H1 (cell line): ENCODE measurements at regions of chr12 and their contacts with region 1.

Region 1: DNA sequence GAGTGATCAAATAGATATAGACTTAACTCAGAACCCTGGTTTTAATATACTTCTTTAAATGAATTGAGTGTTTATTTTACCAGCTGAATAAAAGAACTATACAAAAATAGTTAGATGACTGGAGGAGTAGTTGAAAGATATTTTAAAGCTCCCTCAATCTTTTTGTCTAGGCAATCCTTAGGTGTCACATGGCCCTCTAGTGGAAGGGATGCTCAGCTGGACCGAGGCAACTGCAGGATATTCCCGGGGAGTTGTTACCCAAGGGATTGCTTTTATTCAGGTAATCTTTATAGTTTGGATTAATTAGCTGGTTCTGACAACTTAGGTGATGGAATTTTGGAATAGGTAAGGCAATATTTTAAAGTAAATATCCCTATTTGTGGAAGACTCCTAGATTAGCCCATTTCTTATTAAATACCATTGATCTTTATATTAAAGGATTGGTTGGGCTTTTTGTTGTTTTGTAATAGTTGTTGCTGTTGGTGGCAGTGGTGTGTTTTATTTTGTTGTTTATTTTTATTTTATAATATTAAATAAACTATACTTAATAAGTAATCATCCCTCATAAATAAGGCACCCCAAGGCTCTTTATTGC is 57.1 kb downstream of the ZDHHC17 start:
- DNase-seq: peak in 1 of 2 experiments; percentile 5
- H3K4me3 ChIP-seq: no peak overlapping the region
- H3K27ac ChIP-seq: no peak overlapping the region
- H3K4me1 ChIP-seq: no peaks in the 10 kb centered on the region
- H3K27me3 ChIP-seq: no peaks in the 10 kb centered on the region
- CTCF ChIP-seq: peak; percentile 71 to 74 (median 73)
- EP300 ChIP-seq: no peak
- POLR2A ChIP-seq: no peak
- RAD21 ChIP-seq: peak; percentile 76 to 79

Region 2: GRCh38 chr12:76621582-76622024 is 199.4 kb before region 1 on chr12:
- CTCF ChIA-PET with region 1: interaction called, 16 read pairs
- POLR2A ChIA-PET with region 1: no interaction called
- DNase-seq: peak; percentile 17 to 77
- H3K4me3 ChIP-seq: no peak overlapping the region
- H3K27ac ChIP-seq: no peak overlapping the region
- H3K4me1 ChIP-seq: no peaks in the 10 kb centered on the region; a peak in 1 of 7 replicates
- H3K27me3 ChIP-seq: no peaks in the 10 kb centered on the region
- CTCF ChIP-seq: peak in 2 of 3 experiments; percentile 86 to 89; a peak in 3 of 4 replicates
- EP300 ChIP-seq: no peak
- POLR2A ChIP-seq: no peak
- RAD21 ChIP-seq: peak; percentile 99

Region 3: DNA sequence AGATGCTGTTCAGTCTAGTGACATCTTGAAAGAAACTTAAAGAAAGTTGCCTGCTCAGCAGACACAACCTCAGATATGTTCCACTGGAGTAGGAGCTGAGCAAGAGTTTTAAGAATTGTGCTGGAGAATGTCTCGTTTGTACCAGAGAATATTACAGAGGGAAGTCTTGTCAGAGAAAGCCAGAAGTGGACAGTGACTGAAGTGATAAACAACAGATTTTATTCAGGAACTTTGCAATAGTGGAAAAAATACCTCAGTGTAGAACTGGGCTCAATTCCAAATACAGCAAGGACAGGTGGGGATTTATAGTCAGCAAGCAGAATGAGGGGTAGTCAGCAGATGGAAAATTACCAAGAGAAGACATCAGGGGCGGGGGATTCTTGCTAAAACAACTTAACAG is 38.5 kb before region 1 on chr12:
- CTCF ChIA-PET with region 1: no interaction called
- POLR2A ChIA-PET with region 1: no interaction called
- DNase-seq: no peak
- H3K4me3 ChIP-seq: no peak overlapping the region
- H3K27ac ChIP-seq: no peak overlapping the region
- H3K4me1 ChIP-seq: peaks cover 0 to 16% (median 7%) of the 10 kb centered on the region in 4 experiments; a peak in 4 of 7 replicates
- H3K27me3 ChIP-seq: no peaks in the 10 kb centered on the region
- CTCF ChIP-seq: no peak
- EP300 ChIP-seq: no peak
- POLR2A ChIP-seq: no peak
- RAD21 ChIP-seq: no peak

Region 4: GRCh38 chr12:76810671-76811419 is 10.1 kb before region 1 on chr12:
- CTCF ChIA-PET with region 1: interaction called, 21 read pairs
- POLR2A ChIA-PET with region 1: no interaction called
- DNase-seq: no peak
- H3K4me3 ChIP-seq: no peak overlapping the region
- H3K27ac ChIP-seq: no peak overlapping the region
- H3K4me1 ChIP-seq: no peaks in the 10 kb centered on the region
- H3K27me3 ChIP-seq: peaks cover 0 to 1% (median 0%) of the 10 kb centered on the region in 4 experiments; a peak in 1 of 7 replicates
- CTCF ChIP-seq: no peak
- EP300 ChIP-seq: no peak
- POLR2A ChIP-seq: no peak
- RAD21 ChIP-seq: no peak

Region 5: GRCh38 chr12:76871742-76872141 is 50.8 kb after region 1 on chr12:
- CTCF ChIA-PET with region 1: no interaction called
- POLR2A ChIA-PET with region 1: no interaction called
- DNase-seq: no peak
- H3K4me3 ChIP-seq: no peak overlapping the region
- H3K27ac ChIP-seq: no peak overlapping the region
- H3K4me1 ChIP-seq: peaks cover 3 to 20% (median 15%) of the 10 kb centered on the region in 4 experiments; a peak in 5 of 7 replicates
- H3K27me3 ChIP-seq: no peaks in the 10 kb centered on the region
- CTCF ChIP-seq: no peak
- EP300 ChIP-seq: no peak
- POLR2A ChIP-seq: no peak
- RAD21 ChIP-seq: no peak